CD4-positive, alpha-beta memory T cell (primary cell): ENCODE measurements at regions of chr12 and their contacts with region 1.

Region 1: DNA sequence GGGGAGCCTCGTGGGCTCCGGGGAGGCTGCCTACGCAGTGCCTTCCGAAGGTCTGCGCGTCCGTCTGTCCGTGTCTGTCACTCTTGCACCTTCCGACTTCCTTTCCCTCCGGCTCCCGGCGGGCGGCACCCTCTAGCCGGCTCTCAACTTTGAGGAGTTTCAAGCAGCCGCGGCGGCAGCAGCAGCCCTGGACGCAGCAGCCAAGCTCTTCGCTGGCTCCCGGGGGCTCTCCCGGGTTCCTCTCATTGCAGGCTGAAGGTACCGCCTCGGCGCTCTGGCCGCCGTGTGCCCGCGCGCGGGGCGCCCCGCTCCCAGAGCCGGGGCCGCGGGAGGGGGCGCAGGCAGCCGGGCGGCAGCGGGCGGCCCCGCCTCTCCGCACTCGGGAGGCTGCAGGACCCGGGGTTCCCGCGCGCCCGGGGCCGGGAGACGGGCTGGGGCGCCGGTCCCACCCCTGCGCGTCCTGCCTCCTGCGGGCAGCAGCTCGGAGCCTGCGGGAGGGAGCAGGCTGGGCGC is at the starts of genes AMIGO2 and PCED1B:
- DNase-seq: peak; percentile 43 to 63 (median 51)
- H3K4me3 ChIP-seq: peak within 1 kb of the TSS; percentile 91 to 92
- H3K4me3 Mint-ChIP-seq: peak within 1 kb of the TSS; percentile 96 to 99 (median 98)
- H3K27ac ChIP-seq: peak within 1 kb of the TSS; percentile 74
- H3K27ac Mint-ChIP-seq: peak within 1 kb of the TSS; percentile 92 to 99 (median 98)
- H3K4me1 ChIP-seq: peaks cover 66% of the 10 kb centered on the region
- H3K4me1 Mint-ChIP-seq: peaks cover 52 to 83% (median 66%) of the 10 kb centered on the region in 4 donors
- H3K27me3 ChIP-seq: no peaks in the 10 kb centered on the region
- H3K27me3 Mint-ChIP-seq: peaks cover 0 to 1% of the 10 kb centered on the region in 2 donors
- total RNA-seq, gene AMIGO2: 12.8 to 13.1 TPM
- total RNA-seq, gene PCED1B: 44.3 to 49.0 TPM

Region 2: DNA sequence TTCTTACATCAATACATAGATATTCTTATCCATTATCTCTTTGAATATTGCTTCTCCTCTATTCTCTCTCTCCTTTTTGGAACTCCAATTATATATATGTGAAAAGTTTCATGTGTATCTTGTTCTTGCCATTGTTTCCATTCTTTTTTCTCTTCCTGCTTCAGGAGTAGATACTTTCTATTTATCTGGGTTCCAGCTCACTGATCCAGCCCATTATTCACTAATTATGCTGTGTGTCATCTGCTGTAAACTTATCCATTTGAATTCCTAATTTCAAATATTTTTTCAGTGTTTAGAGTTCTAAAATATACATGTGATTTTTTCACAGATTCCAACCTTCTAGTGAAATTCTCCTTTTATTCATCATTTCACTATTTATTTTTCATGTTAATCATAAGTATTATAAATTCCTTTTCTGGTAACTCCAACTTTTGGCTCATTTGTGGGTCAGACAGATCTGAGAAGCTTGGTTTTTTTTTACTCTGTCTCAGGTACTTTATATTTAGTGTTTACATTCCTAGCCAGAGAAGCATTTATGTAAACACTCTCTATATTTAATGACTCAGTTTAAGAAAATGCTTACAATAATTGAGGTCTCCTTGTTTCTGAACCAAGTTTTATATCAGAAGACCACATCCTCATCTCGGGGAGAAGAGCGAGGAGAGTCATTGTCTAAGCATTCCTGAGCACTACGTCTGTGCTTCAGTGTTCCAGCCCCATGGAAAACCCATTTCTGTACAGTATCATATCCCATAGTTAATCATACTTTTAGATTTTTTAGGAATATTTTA is 16.1 kb after region 1 on chr12:
- CTCF ChIA-PET with region 1: interaction called, 6 read pairs
- POLR2A ChIA-PET with region 1: interaction called, 16 read pairs
- intact Hi-C with region 1: no loop called
- DNase-seq: no peak
- H3K4me3 ChIP-seq: no peak overlapping the region
- H3K4me3 Mint-ChIP-seq: peak overlapping the region in 2 of 8 donors; percentile 45 to 66
- H3K27ac ChIP-seq: no peak overlapping the region
- H3K27ac Mint-ChIP-seq: peak overlapping the region in 1 of 7 donors; percentile 36
- H3K4me1 ChIP-seq: peaks cover 20% of the 10 kb centered on the region
- H3K4me1 Mint-ChIP-seq: peaks cover 17 to 35% (median 26%) of the 10 kb centered on the region in 4 donors
- H3K27me3 ChIP-seq: no peaks in the 10 kb centered on the region
- H3K27me3 Mint-ChIP-seq: no peaks in the 10 kb centered on the region

Region 3: DNA sequence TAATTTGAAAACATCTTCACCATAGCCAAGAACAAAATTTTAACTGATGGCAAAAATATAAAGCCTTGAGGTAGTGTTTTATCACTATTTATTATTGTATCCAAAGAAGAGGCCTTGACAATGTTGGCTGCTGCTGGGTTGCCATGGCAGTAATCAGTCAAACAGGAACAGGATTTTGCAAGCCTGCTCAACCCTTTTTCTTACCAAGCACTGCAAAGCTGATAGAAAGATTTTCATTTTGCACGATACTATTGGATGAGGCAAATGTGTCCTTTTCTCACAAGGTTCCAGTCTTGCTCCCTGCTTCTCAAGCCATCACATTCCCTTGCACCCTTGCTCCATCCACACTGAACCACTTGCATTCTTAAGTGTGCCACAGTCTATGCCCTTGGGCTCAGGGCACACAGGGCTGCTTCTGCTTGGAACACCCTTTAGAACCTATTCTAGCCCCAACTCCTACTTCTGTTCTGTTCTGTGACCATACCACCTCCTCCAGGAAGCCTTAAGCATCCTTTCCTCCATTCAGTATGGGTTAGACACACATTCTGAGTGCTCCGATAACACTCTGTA is 76.7 kb after region 1 on chr12:
- CTCF ChIA-PET with region 1: no interaction called
- POLR2A ChIA-PET with region 1: interaction called, 13 read pairs
- intact Hi-C with region 1: no loop called
- DNase-seq: peak in 4 of 5 donors; percentile 16 to 38 (median 24)
- H3K4me3 ChIP-seq: no peak overlapping the region
- H3K4me3 Mint-ChIP-seq: peak overlapping the region in 4 of 8 donors; percentile 9 to 60 (median 39)
- H3K27ac ChIP-seq: no peak overlapping the region
- H3K27ac Mint-ChIP-seq: peak overlapping the region; percentile 28 to 93 (median 73)
- H3K4me1 ChIP-seq: peaks cover 32% of the 10 kb centered on the region
- H3K4me1 Mint-ChIP-seq: peaks cover 31 to 49% (median 42%) of the 10 kb centered on the region in 4 donors
- H3K27me3 ChIP-seq: no peaks in the 10 kb centered on the region
- H3K27me3 Mint-ChIP-seq: no peaks in the 10 kb centered on the region

Region 4: GRCh38 chr12:47207340-47207717 is 127.8 kb after region 1 on chr12:
- CTCF ChIA-PET with region 1: interaction called, 22 read pairs
- POLR2A ChIA-PET with region 1: interaction called, 154 read pairs
- intact Hi-C with region 1: no loop called
- DNase-seq: peak; percentile 38 to 76 (median 44)
- H3K4me3 ChIP-seq: peak overlapping the region; percentile 24 to 64
- H3K4me3 Mint-ChIP-seq: peak overlapping the region; percentile 68 to 97 (median 82)
- H3K27ac ChIP-seq: peak overlapping the region; percentile 60
- H3K27ac Mint-ChIP-seq: peak overlapping the region; percentile 87 to 96 (median 94)
- H3K4me1 ChIP-seq: peaks cover 77% of the 10 kb centered on the region
- H3K4me1 Mint-ChIP-seq: peaks cover 64 to 88% (median 76%) of the 10 kb centered on the region in 4 donors
- H3K27me3 ChIP-seq: no peaks in the 10 kb centered on the region
- H3K27me3 Mint-ChIP-seq: no peaks in the 10 kb centered on the region

Region 5: DNA sequence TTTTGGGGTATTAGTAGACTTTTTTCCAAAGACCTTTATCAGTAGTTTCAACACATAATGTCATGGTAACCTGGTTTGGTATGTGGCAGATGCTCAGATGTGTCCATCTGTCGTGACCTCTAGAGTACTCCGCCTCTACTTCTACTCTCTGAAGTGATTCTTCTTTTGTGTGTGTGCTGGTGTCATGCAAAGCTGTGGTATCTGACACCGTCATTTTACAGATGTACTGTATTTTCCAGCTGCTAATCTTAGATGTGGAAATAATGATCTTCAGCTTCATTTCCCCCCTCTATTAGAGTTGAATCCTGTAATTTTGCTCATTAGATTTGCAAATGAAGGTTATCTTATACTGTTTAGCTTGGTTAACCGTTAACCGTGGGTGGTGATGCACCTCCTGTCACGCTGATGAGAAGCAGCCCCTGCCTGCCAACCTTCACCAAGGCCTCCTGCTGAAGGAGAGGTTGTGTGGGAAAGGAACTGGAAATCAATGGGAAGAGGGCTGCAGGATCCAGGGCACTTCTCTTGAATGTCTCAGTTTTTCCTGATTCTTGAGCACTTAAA is 222.7 kb after region 1 on chr12:
- CTCF ChIA-PET with region 1: interaction called, 20 read pairs
- POLR2A ChIA-PET with region 1: interaction called, 39 read pairs
- intact Hi-C with region 1: loop called (anchors 1 kb)
- DNase-seq: no peak
- H3K4me3 ChIP-seq: no peak overlapping the region
- H3K4me3 Mint-ChIP-seq: peak overlapping the region in 3 of 8 donors; percentile 34 to 46 (median 41)
- H3K27ac ChIP-seq: no peak overlapping the region
- H3K27ac Mint-ChIP-seq: peak overlapping the region in 4 of 7 donors; percentile 44 to 90 (median 76)
- H3K4me1 ChIP-seq: peaks cover 43% of the 10 kb centered on the region
- H3K4me1 Mint-ChIP-seq: peaks cover 39 to 64% (median 51%) of the 10 kb centered on the region in 4 donors
- H3K27me3 ChIP-seq: no peaks in the 10 kb centered on the region
- H3K27me3 Mint-ChIP-seq: no peaks in the 10 kb centered on the region

Region 6: DNA sequence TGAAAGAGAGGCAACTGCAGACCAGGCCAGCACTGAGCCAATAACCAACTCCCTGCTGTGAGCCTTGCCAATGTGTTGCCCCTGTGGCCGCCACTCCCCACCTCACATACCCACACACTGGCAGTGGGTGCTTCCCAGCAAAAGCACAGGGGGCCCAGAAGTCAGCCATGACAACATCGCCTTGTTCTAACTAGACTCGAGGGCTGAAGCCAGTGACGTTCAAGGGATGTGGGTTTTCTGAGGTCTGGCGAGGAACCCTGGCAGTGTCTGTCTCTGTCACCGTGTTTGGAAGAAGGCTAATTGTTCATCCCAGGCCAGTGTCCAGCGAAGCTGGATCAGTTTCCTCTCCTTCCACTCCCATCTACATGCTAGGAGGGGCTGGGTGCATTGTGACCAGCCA is 312.0 kb after region 1 on chr12:
- CTCF ChIA-PET with region 1: interaction called, 71 read pairs
- POLR2A ChIA-PET with region 1: interaction called, 11 read pairs
- intact Hi-C with region 1: no loop called
- DNase-seq: peak; percentile 66 to 86 (median 72)
- H3K4me3 ChIP-seq: no peak overlapping the region
- H3K4me3 Mint-ChIP-seq: peak overlapping the region; percentile 29 to 83 (median 63)
- H3K27ac ChIP-seq: peak overlapping the region; percentile 54
- H3K27ac Mint-ChIP-seq: peak overlapping the region; percentile 95 to 99 (median 98)
- H3K4me1 ChIP-seq: peaks cover 60% of the 10 kb centered on the region
- H3K4me1 Mint-ChIP-seq: peaks cover 45 to 74% (median 60%) of the 10 kb centered on the region in 4 donors
- H3K27me3 ChIP-seq: no peaks in the 10 kb centered on the region
- H3K27me3 Mint-ChIP-seq: no peaks in the 10 kb centered on the region